Left ventricle myocardium inferior (tissue), 1 donor: ENCODE measurements at regions of chr16 and their contacts with region 1.

Region 1: DNA sequence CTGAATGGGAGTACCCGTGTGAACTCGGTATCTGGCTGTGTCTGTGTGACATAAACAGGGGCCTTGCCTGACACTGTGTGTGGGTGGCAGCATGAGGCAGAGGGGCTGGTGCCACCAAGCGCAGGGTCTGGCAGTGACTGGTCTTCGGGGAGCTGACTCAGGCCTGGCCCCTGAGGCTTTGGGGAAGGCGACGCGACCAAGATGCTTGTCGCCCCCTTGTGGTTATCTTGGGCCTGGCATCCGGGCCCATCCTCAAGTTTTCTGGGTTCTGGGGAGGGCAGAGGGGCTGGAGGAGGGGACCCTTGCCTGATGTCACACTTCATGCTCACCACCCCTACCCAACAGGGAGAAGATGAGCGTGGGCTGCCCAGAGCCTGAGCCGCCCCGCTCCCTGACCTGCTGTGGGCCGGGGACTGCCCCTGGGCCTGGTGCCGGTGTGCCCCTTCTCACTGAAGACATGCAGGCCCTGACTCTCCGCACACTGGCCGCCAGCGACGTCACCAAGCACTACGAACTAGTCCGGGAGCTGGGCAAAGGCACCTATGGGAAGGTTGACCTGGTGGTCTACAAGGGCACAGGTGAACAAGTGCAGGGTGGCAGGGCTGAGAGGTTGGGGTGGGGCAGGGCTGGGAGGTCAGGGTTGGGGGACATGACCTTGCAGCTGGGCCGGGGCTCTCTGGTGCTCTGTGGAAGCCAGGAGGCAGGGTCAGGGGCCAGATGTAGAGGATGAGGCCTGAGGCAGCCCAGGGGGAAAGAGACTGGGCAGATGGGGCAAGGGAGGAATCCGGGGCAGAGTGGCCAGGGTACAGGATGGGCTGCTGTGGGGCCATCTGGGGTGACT is 24.9 kb downstream of the SBK1 start:
- DNase-seq: peak; percentile 41
- H3K4me3 ChIP-seq: no peak overlapping the region
- H3K27ac ChIP-seq: no peak overlapping the region
- H3K4me1 ChIP-seq: no peaks in the 10 kb centered on the region
- H3K27me3 ChIP-seq: peaks cover 8% of the 10 kb centered on the region
- CTCF ChIP-seq: peak; percentile 86

Region 2: GRCh38 chr16:28277537-28278388 is 39.5 kb before region 1 on chr16:
- intact Hi-C with region 1: loop called (anchors 5 kb)
- DNase-seq: peak; percentile 84
- H3K4me3 ChIP-seq: peak overlapping the region; percentile 57
- H3K27ac ChIP-seq: no peak overlapping the region
- H3K4me1 ChIP-seq: peaks cover 12% of the 10 kb centered on the region
- H3K27me3 ChIP-seq: peaks cover 48% of the 10 kb centered on the region
- CTCF ChIP-seq: peak; percentile 96